Activated T-helper 1 cell treated with anti-CD3 and anti-CD28 coated beads, Interleukin-12 subunit alpha, Interleukin-12 subunit beta, Interleukin-2, Interleukin-4 antibody, amounts not matched to agents 30 ng/mL and 10 ng/mL and 1 ng/mL, durations not matched to agents 14 hours and 24 hours and 36 hours (primary cell): ENCODE measurements at regions of chr2 and their contacts with region 1.

Region 1: DNA sequence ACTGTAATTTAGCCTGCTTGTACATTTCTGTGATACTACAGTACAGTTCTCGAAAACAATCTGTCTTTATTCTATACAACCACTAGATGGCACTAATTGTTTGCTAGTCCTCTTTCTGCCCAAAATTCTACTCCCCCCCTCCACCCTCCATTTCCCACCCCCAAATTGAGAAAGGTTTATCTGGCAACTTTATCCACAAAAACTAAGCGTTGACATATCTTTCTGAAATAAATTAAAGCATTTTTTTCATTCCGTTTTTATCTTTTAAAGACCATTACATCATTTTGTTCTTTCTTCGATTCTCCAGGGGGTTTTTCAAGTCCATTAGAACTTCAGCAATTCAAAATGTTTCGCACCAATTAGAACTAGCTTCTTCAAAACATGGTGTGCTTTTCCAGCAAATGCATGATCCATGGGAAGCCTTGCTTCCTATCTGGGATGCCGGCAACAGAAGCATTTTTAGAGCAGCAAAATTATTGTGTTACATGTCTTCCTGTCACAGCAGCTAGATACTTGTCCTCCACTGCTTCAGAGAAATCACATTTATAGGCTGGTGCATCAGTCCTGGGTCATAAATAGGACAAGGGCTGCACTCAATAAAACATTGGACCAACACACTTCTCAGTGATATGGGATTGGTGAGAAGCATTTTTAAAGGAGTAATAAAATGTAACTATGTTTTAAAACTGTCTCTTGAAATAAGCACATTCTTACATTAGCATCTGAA is 241.3 kb downstream of the PAX3 start:
- DNase-seq: no peak
- H3K4me3 Mint-ChIP-seq: no peak overlapping the region
- H3K27ac Mint-ChIP-seq: no peak overlapping the region
- H3K4me1 Mint-ChIP-seq: no peaks in the 10 kb centered on the region
- H3K27me3 Mint-ChIP-seq: peaks cover 8% of the 10 kb centered on the region

Region 2: GRCh38 chr2:222283634-222284033 is 226.1 kb after region 1 on chr2:
- intact Hi-C with region 1: loop called (anchors 2 kb)
- DNase-seq: no peak
- H3K4me3 Mint-ChIP-seq: no peak overlapping the region
- H3K27ac Mint-ChIP-seq: no peak overlapping the region
- H3K4me1 Mint-ChIP-seq: no peaks in the 10 kb centered on the region
- H3K27me3 Mint-ChIP-seq: peaks cover 32% of the 10 kb centered on the region

Region 3: GRCh38 chr2:222561817-222562645 is 504.5 kb after region 1 on chr2:
- intact Hi-C with region 1: loop called (anchors 5 kb)
- DNase-seq: peak; percentile 9
- H3K4me3 Mint-ChIP-seq: no peak overlapping the region
- H3K27ac Mint-ChIP-seq: no peak overlapping the region
- H3K4me1 Mint-ChIP-seq: no peaks in the 10 kb centered on the region
- H3K27me3 Mint-ChIP-seq: no peaks in the 10 kb centered on the region

Region 4: DNA sequence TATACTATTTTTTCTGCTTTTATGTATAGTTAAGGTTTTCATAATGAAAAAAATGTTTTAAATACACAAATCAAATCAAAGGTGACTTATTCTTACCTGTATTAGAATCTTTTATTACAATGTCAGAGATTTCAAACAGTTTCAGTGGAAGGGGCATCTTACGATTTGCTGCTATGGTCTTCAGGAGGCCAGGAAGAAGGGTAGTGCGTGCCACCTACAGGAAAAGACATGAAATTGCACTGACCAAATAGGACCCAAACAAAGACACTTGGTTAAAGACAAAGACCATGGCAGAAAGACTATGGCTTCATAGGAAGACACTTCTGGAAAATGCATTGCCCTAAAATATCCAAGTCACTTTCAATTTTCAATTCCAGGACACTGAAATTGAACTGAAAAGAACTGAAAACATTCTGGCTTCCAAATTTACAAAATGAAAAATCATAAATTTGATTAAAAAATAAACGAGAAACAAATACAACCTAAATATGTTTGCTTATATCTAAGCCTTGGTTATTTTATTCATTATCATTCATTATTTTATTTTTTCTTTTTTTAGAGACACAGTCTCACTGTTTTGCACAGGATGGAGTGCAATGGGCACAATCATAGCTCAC is 556.3 kb after region 1 on chr2:
- intact Hi-C with region 1: loop called (anchors 2 kb)
- DNase-seq: no peak
- H3K4me3 Mint-ChIP-seq: no peak overlapping the region
- H3K27ac Mint-ChIP-seq: no peak overlapping the region
- H3K4me1 Mint-ChIP-seq: peaks cover 8% of the 10 kb centered on the region
- H3K27me3 Mint-ChIP-seq: no peaks in the 10 kb centered on the region

Region 5: GRCh38 chr2:222813177-222813843 is 755.8 kb after region 1 on chr2:
- intact Hi-C with region 1: no loop called
- DNase-seq: no peak
- H3K4me3 Mint-ChIP-seq: peak overlapping the region; percentile 10
- H3K27ac Mint-ChIP-seq: peak overlapping the region; percentile 94
- H3K4me1 Mint-ChIP-seq: peaks cover 27% of the 10 kb centered on the region
- H3K27me3 Mint-ChIP-seq: peaks cover 7% of the 10 kb centered on the region